Brain microvascular endothelial cell (primary cell): ENCODE measurements at regions of chr10 and their contacts with region 1.

Region 1: GRCh38 chr10:120942806-120943413 is 91.7 kb downstream of the WDR11 start:
- DNase-seq: peak; percentile 73
- H3K4me3 ChIP-seq: no peak overlapping the region
- H3K27ac ChIP-seq: no peak overlapping the region
- H3K27me3 ChIP-seq: no peaks in the 10 kb centered on the region
- CTCF ChIP-seq: peak; percentile 91

Region 2: GRCh38 chr10:120538091-120538490 is 404.8 kb before region 1 on chr10:
- in situ Hi-C with region 1: no loop called
- DNase-seq: no peak
- H3K4me3 ChIP-seq: no peak overlapping the region
- H3K27ac ChIP-seq: no peak overlapping the region
- H3K27me3 ChIP-seq: no peaks in the 10 kb centered on the region
- CTCF ChIP-seq: no peak

Region 3: DNA sequence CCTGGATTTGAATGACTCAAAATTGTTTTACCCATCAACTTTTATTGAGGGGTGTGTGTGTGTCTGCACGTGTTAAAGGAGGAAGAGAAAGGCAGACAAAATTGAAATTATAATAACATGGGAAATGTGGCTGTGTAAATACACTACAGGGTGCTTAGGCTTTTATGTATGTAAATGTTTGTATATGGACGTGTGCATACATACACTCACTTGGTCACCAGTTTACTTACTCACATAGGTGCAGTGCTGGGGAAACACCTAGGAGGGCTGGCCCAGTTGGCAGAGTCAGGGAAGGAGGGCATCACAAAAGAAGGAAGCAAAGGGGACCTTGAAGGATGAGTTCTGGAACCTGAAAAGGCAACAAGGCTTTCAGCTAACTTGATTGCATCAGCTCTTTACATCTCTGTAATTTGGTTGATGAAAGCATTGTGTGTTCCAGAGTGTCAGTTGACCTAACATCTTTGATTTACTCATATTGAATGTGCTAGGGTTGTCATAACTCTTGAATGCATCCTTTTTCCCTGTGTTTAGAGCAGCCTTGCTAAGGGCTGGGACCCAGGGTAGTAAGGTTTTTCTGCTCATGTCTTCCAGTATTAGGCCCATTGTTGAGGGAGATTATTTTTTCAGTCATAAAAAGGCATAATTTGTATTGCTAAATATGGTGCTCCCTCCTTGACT is 81.6 kb before region 1 on chr10:
- in situ Hi-C with region 1: no loop called
- DNase-seq: no peak
- H3K4me3 ChIP-seq: no peak overlapping the region
- H3K27ac ChIP-seq: no peak overlapping the region
- H3K27me3 ChIP-seq: no peaks in the 10 kb centered on the region
- CTCF ChIP-seq: no peak

Region 4: DNA sequence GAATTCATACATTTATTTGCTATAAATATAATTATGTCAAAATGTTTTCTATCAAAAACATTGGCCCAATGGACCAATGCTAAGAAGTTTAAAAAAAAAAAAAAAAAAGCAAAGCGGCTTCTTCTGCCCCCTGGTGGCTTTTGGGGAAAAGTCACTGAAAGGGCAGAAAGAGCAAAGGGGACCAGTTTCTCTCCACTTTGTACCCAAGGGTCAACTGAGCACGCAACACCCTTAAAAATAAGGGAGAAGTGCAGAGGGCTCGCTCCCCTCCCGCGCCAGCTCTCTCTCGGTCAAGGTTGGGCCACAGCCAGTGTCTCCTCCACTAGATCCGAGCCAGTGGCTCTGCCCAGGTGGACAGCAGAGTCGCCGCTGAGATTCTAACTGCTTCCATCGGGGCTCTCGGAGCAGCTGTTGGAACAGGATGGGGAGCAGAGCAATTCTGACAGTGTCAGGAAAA is 791.7 kb after region 1 on chr10:
- in situ Hi-C with region 1: loop called (anchors 25 kb)
- DNase-seq: no peak
- H3K4me3 ChIP-seq: no peak overlapping the region
- H3K27ac ChIP-seq: no peak overlapping the region
- H3K27me3 ChIP-seq: no peaks in the 10 kb centered on the region
- CTCF ChIP-seq: peak; percentile 81

Region 5: DNA sequence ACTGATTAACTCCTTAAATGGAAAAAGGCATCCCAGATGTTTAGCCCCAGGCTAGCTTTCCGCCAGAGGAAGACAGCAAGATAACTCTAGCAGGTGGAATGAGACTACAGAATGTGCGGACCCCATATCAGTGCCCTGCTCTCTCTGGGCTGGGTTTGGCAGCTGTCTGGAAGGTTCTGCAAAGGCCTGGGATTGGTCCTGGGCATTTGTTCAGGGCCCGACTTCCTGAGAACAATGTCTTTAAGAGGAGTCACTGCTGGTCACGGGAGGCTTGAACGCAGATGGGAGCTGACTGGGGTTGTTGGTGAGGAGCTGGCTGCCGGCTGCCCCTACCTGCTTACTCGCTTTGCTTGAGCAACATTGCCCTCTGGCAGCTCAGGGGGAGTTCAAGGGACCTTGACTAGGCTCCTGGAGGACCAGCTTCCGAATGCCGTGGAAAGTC is 1197.6 kb after region 1 on chr10:
- in situ Hi-C with region 1: no loop called
- DNase-seq: peak; percentile 48
- H3K4me3 ChIP-seq: no peak overlapping the region
- H3K27ac ChIP-seq: peak overlapping the region; percentile 75
- H3K27me3 ChIP-seq: no peaks in the 10 kb centered on the region
- CTCF ChIP-seq: no peak